ENCODE measurements at regions of chr18 and their contacts with region 1.

Region 1: DNA sequence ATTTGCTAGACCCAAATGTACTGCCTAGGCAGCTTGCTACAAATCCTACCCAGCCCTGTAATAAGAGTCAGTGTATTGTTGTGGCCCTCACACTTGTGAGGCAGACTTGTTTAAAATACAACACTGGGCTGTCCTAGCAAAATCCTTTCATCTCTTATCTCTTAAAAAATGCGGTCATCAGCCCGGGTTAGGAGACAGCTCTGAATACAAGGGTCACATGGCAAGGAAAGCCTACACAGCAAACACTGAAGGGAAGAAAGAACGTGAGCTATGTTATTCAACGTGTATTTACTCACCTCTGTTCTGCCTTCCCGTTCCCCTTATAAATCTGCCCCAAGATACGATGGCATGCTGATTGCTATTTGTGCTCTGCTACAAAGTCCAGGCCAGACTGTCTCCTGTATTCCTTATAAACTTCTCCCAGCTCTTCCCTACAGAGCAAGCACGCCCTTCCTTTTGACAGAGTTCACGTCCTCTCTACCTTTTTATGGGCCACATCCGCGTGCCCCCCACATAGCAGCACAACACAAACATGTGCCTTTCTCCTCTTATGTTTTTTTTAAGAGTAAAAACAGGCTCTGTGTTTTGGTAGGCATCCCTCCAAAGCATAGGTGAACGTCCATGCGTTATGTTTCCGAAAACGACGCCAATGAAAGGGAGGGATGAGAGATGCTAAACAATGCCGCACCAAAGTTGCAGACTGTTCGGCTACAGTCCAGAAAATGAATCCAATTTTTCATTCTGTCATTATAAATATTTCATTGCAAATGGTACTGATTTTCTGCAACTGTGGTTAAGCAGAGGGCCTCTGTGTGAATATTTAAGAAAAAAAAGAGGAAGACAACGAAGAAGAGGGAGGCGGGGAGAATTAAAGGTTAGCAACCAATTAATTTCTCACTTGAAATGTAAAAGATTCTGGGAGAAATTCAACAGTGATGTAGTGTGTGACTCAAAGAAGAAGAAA is 274.7 kb downstream of the ZNF521 start:
- DNase-seq: no peak
- ATAC-seq: no peak
- H3K4me3 ChIP-seq: no peak overlapping the region
- H3K27ac ChIP-seq: no peak overlapping the region
- H3K4me1 ChIP-seq: no peaks in the 10 kb centered on the region
- H3K27me3 ChIP-seq: no peaks in the 10 kb centered on the region
- CTCF ChIP-seq: no peak

Region 2: GRCh38 chr18:24831871-24832665 is 245.2 kb before region 1 on chr18:
- intact Hi-C with region 1: no loop called
- DNase-seq: no peak
- ATAC-seq: no peak
- H3K4me3 ChIP-seq: no peak overlapping the region
- H3K27ac ChIP-seq: no peak overlapping the region
- H3K4me1 ChIP-seq: no peaks in the 10 kb centered on the region
- H3K27me3 ChIP-seq: peaks cover 0 to 10% (median 4%) of the 10 kb centered on the region in 3 donors
- CTCF ChIP-seq: no peak

Region 3: DNA sequence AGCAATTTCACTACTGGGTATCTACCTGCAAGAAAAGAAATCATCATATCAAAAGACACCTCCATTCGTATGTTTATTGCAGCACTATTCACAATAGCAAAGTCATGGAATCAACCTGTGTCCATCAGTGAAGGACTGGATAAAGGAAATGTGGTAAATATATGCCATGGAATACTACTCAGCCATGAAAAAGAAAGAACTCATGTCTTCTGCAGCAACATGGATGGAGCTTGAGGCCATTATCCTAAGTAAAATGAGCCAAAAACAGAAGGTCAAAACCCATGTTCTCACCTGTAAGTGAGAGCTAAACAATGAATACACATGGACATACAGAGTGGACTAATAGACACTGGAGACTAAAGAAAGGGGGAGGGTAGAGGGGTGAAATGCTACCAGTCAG is 47.5 kb before region 1 on chr18:
- intact Hi-C with region 1: loop called in 1 of 2 experiments (anchors 5 kb)
- DNase-seq: no peak
- ATAC-seq: no peak
- H3K4me3 ChIP-seq: no peak overlapping the region
- H3K27ac ChIP-seq: no peak overlapping the region
- H3K4me1 ChIP-seq: no peaks in the 10 kb centered on the region
- H3K27me3 ChIP-seq: no peaks in the 10 kb centered on the region
- CTCF ChIP-seq: no peak